ENCODE measurements at regions of chr5 and their contacts with region 1.

Region 1: GRCh38 chr5:112492291-112492690 is 73.2 kb upstream of the EPB41L4A start:
- DNase-seq: peak; percentile 69
- H3K4me3 ChIP-seq: no peak overlapping the region
- H3K27ac ChIP-seq: no peak overlapping the region
- H3K4me1 ChIP-seq: no peaks in the 10 kb centered on the region
- H3K27me3 ChIP-seq: no peaks in the 10 kb centered on the region
- CTCF ChIP-seq: peak; percentile 73 to 78

Region 2: GRCh38 chr5:112372539-112372938 is 119.8 kb before region 1 on chr5:
- CTCF ChIA-PET with region 1: no interaction called
- dilution Hi-C with region 1: no loop called
- in situ Hi-C with region 1: no loop called
- intact Hi-C with region 1: loop called (anchors 5 kb)
- DNase-seq: peak; percentile 19
- H3K4me3 ChIP-seq: no peak overlapping the region
- H3K27ac ChIP-seq: no peak overlapping the region
- H3K4me1 ChIP-seq: no peaks in the 10 kb centered on the region
- H3K27me3 ChIP-seq: peaks cover 2% of the 10 kb centered on the region
- CTCF ChIP-seq: peak; percentile 7 to 39

Region 3: GRCh38 chr5:112534611-112535255 is 42.4 kb after region 1 on chr5:
- CTCF ChIA-PET with region 1: no interaction called
- dilution Hi-C with region 1: no loop called
- in situ Hi-C with region 1: no loop called
- intact Hi-C with region 1: no loop called
- DNase-seq: no peak
- H3K4me3 ChIP-seq: no peak overlapping the region
- H3K27ac ChIP-seq: no peak overlapping the region
- H3K4me1 ChIP-seq: no peaks in the 10 kb centered on the region
- H3K27me3 ChIP-seq: peaks cover 2% of the 10 kb centered on the region
- CTCF ChIP-seq: no peak

Measured in mammary epithelial cell (primary cell).